ENCODE measurements at regions of chr15 and their contacts with region 1.

Region 1: DNA sequence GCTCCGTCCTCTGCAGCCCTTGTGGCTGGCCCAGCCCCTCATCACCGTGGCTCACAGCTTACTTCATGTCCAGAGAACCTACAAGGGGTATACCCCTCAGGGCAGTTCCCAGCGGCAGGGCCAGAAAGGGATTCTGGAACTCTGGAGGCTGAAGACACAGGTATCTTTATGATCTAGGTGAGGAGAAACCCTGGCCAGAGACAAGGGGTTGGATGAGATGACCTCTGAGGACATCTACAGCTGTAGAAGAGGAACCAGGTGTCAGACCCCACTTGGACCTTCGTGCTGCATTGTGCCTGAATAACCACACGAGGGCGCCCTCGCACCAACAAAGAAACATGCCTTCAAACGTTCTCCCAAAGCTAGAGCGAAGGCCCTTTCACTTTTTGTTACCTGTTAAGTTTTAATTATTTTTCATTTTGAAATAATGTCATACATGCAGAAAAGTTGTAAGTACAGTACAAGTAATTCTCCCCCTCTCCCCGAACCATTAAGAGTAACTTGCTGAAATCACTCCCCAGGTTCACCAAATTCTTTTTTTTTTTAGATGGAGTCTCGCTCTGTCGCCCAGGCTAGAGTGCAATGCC is 118.7 kb upstream of the SMAD3 start:
- DNase-seq: peak; percentile 70
- H3K4me3 ChIP-seq: no peak overlapping the region
- H3K27ac ChIP-seq: no peak overlapping the region
- H3K4me1 ChIP-seq: peaks cover 4% of the 10 kb centered on the region
- H3K27me3 ChIP-seq: no peaks in the 10 kb centered on the region
- CTCF ChIP-seq: peak; percentile 81
- POLR2A ChIP-seq: no peak

Region 2: DNA sequence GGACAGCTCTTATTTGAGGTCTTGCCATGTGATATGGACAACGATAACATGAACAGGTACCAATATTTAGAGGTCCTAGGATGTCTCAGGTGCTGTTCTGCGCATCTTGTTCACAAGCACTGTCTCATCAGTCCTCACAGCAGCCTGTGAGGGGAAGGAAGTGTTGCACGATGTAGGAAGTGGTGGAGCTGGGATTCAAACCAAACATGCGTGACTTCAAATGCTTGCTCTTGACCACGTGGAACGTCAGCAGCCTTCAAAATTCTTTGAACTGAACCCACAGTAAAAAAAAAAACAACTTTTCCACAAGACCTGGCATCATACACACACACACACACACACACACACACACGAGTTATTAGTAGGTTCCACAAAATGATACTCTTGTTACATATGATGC is 34.7 kb before region 1 on chr15:
- CTCF ChIA-PET with region 1: no interaction called
- POLR2A ChIA-PET with region 1: no interaction called
- dilution Hi-C with region 1: no loop called
- intact Hi-C with region 1: no loop called
- DNase-seq: no peak
- H3K4me3 ChIP-seq: no peak overlapping the region
- H3K27ac ChIP-seq: no peak overlapping the region
- H3K4me1 ChIP-seq: no peaks in the 10 kb centered on the region
- H3K27me3 ChIP-seq: peaks cover 11 to 19% of the 10 kb centered on the region in 2 experiments
- CTCF ChIP-seq: no peak
- POLR2A ChIP-seq: no peak

Region 3: GRCh38 chr15:67109141-67110034 is 162.7 kb after region 1 on chr15:
- CTCF ChIA-PET with region 1: interaction called, 8 read pairs
- POLR2A ChIA-PET with region 1: no interaction called
- dilution Hi-C with region 1: no loop called
- intact Hi-C with region 1: loop called (anchors 5 kb)
- DNase-seq: peak; percentile 94
- H3K4me3 ChIP-seq: no peak overlapping the region
- H3K27ac ChIP-seq: peak overlapping the region; percentile 95
- H3K4me1 ChIP-seq: peaks cover 63% of the 10 kb centered on the region
- H3K27me3 ChIP-seq: no peaks in the 10 kb centered on the region
- CTCF ChIP-seq: no peak
- POLR2A ChIP-seq: no peak

Region 4: GRCh38 chr15:67175643-67176071 is 229.0 kb after region 1 on chr15:
- CTCF ChIA-PET with region 1: interaction called, 10 read pairs
- POLR2A ChIA-PET with region 1: no interaction called
- dilution Hi-C with region 1: no loop called
- intact Hi-C with region 1: no loop called
- DNase-seq: peak; percentile 54
- H3K4me3 ChIP-seq: no peak overlapping the region
- H3K27ac ChIP-seq: peak overlapping the region; percentile 87
- H3K4me1 ChIP-seq: peaks cover 56% of the 10 kb centered on the region
- H3K27me3 ChIP-seq: no peaks in the 10 kb centered on the region
- CTCF ChIP-seq: no peak
- POLR2A ChIP-seq: no peak

Region 5: GRCh38 chr15:67196672-67197363 is 250.1 kb after region 1 on chr15:
- CTCF ChIA-PET with region 1: interaction called, 4 read pairs
- POLR2A ChIA-PET with region 1: no interaction called
- dilution Hi-C with region 1: no loop called
- intact Hi-C with region 1: loop called (anchors 5 kb)
- DNase-seq: peak; percentile 28
- H3K4me3 ChIP-seq: no peak overlapping the region
- H3K27ac ChIP-seq: no peak overlapping the region
- H3K4me1 ChIP-seq: peaks cover 20% of the 10 kb centered on the region
- H3K27me3 ChIP-seq: no peaks in the 10 kb centered on the region
- CTCF ChIP-seq: no peak
- POLR2A ChIP-seq: no peak

Region 6: DNA sequence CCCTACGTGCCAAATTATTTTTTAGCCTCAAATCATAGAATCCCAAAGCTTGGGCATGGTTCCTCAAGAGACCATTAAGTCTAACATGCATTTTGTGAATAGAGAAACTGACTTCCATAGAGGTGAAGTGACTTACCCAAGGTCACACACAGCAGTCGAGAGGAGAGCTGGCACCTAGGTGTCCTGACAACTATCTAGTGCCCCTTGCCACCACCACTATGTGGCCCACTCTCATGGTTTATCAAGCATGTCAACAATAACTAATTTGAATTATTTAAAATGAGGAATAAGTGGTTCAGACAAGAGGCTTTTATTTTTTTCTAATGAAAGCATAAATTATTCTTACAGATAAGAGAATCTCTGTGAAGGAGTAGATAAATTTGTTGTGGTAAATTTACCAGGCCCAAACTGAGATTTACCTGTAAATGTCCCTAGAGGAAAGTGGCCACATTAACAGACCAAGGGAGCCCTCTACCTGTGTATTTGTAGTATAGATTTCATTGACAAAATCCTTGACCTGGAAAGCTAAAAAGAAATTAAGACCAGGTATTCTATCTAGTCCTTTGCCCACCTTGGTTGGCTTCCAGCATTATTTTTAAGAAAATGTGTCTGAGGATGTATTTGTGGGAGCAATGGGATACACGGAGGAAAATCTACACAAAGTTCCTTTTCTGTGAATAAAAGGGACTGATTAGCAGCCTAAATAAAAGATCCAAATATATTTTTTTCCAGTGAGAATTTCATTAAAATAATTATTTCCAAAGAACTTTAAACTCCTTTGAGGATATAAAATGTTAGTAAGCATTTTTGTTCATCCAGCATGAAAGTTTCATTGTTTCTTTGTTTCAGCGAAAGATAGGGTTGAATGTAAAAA is 357.1 kb after region 1 on chr15:
- CTCF ChIA-PET with region 1: interaction called, 68 read pairs
- POLR2A ChIA-PET with region 1: no interaction called
- dilution Hi-C with region 1: no loop called
- intact Hi-C with region 1: loop called (anchors 1 kb)
- DNase-seq: peak; percentile 49
- H3K4me3 ChIP-seq: no peak overlapping the region
- H3K27ac ChIP-seq: no peak overlapping the region
- H3K4me1 ChIP-seq: no peaks in the 10 kb centered on the region
- H3K27me3 ChIP-seq: no peaks in the 10 kb centered on the region
- CTCF ChIP-seq: no peak
- POLR2A ChIP-seq: no peak

Region 7: GRCh38 chr15:67833710-67834511 is 887.2 kb after region 1 on chr15:
- CTCF ChIA-PET with region 1: interaction called, 13 read pairs
- POLR2A ChIA-PET with region 1: no interaction called
- dilution Hi-C with region 1: no loop called
- intact Hi-C with region 1: loop called (anchors 1 kb)
- DNase-seq: peak; percentile 47
- H3K4me3 ChIP-seq: peak overlapping the region in 1 of 3 experiments; percentile 3
- H3K27ac ChIP-seq: no peak overlapping the region
- H3K4me1 ChIP-seq: peaks cover 32% of the 10 kb centered on the region
- H3K27me3 ChIP-seq: peaks cover 73 to 84% of the 10 kb centered on the region in 2 experiments
- CTCF ChIP-seq: peak; percentile 42 to 72
- POLR2A ChIP-seq: no peak

Measured in endothelial cell of umbilical vein (primary cell).